CD4-positive, alpha-beta memory T cell (primary cell): ENCODE measurements at regions of chr9 and their contacts with region 1.

Region 1: DNA sequence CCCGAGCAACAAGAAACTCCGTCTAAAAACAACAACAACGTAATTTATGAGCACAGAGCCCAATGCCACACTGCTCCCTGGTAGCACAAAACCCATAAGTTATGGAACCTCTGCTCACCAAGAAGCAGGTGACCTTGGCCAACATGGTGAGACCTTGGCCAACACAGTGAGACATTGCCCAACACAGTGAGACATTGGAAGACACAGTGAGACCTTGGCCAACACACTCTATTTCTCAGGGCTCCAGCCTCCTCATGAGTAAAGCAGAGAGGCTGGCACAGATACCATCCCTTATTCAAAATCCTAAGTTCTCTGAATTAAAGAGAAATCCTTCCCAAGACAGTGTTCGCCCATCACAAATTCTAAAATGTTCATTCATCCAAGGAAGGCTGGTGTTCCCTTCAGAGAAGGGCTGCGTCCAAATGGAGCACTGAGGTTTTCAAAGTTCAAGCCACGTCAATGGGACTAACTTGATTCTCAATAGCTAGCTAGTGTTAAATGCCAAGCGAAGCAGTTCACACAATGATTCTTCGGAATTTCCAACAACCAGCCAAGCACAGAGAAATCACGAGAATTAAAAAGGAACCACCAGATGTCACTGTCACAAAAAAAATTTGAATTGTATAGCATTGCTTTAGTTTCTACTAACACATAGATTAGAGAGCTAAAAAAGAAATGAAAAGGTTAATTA is 29.5 kb downstream of the TTC39B start:
- DNase-seq: peak in 2 of 5 donors; percentile 27 to 37
- H3K4me3 ChIP-seq: no peak overlapping the region
- H3K4me3 Mint-ChIP-seq: no peak overlapping the region
- H3K27ac ChIP-seq: no peak overlapping the region
- H3K27ac Mint-ChIP-seq: peak overlapping the region in 3 of 7 donors; percentile 2 to 55 (median 48)
- H3K4me1 ChIP-seq: peaks cover 9% of the 10 kb centered on the region
- H3K4me1 Mint-ChIP-seq: peaks cover 26 to 52% (median 32%) of the 10 kb centered on the region in 4 donors
- H3K27me3 ChIP-seq: no peaks in the 10 kb centered on the region
- H3K27me3 Mint-ChIP-seq: no peaks in the 10 kb centered on the region

Region 2: DNA sequence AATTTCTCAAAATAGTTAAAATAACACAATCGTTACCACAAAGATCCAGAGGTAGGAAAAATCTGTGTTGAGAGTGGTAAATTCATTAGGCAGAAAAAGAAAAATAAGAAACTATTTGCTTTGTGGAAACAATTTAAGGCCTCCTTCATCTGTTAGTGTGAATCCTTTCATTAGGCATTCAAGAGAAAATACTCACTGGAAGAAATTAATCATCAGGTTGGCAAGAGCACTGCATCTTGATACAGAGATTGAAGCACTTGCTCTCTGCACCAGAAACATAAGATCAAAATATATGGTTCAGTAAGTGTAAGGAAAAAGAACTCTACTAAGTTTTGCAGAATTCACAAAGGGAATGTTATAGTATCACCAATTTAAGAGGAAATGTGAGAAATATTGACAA is 15.0 kb before region 1 on chr9:
- CTCF ChIA-PET with region 1: no interaction called
- POLR2A ChIA-PET with region 1: no interaction called
- intact Hi-C with region 1: no loop called
- DNase-seq: no peak
- H3K4me3 ChIP-seq: no peak overlapping the region
- H3K4me3 Mint-ChIP-seq: no peak overlapping the region
- H3K27ac ChIP-seq: no peak overlapping the region
- H3K27ac Mint-ChIP-seq: peak overlapping the region in 3 of 7 donors; percentile 68 to 74 (median 74)
- H3K4me1 ChIP-seq: no peaks in the 10 kb centered on the region
- H3K4me1 Mint-ChIP-seq: peaks cover 0 to 25% (median 11%) of the 10 kb centered on the region in 4 donors
- H3K27me3 ChIP-seq: no peaks in the 10 kb centered on the region
- H3K27me3 Mint-ChIP-seq: no peaks in the 10 kb centered on the region

Region 3: DNA sequence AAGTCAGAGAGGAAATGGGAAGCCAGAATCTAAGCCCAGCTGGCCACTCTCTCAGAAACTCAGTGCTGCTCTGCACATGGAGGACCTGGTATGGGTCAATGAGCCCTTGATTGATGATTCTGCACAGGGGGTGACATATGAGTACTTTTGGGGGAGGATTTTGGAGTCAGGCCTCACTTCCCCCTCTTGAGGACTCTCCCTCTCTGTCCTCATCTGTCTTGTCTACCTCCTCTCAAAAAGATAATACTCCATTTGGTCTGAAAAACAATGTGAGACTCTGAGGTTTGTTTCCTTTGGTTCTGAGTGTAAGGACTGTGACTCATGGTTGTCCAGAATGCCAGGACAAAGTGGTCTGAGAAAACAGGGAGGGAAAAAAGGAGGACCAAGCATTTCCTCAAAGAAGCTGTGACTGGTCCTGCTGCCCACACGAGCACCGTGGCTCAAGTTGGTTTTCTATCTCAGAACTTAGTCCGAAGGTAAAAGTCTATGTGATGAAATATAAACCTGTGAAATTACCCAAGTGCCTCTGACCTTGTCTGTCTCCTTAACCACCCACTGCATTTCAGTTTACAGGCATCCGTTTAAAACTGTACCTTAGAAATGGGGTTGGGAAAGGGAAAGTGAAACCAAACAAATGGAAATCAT is 18.3 kb after region 1 on chr9:
- CTCF ChIA-PET with region 1: interaction called, 18 read pairs
- POLR2A ChIA-PET with region 1: interaction called, 3 read pairs
- intact Hi-C with region 1: loop called (anchors 2 kb)
- DNase-seq: peak; percentile 40 to 67 (median 57)
- H3K4me3 ChIP-seq: peak overlapping the region; percentile 31 to 46
- H3K4me3 Mint-ChIP-seq: peak overlapping the region; percentile 74 to 89 (median 85)
- H3K27ac ChIP-seq: peak overlapping the region; percentile 84
- H3K27ac Mint-ChIP-seq: peak overlapping the region; percentile 92 to 99 (median 97)
- H3K4me1 ChIP-seq: peaks cover 77% of the 10 kb centered on the region
- H3K4me1 Mint-ChIP-seq: peaks cover 61 to 87% (median 76%) of the 10 kb centered on the region in 4 donors
- H3K27me3 ChIP-seq: no peaks in the 10 kb centered on the region
- H3K27me3 Mint-ChIP-seq: no peaks in the 10 kb centered on the region

Region 4: DNA sequence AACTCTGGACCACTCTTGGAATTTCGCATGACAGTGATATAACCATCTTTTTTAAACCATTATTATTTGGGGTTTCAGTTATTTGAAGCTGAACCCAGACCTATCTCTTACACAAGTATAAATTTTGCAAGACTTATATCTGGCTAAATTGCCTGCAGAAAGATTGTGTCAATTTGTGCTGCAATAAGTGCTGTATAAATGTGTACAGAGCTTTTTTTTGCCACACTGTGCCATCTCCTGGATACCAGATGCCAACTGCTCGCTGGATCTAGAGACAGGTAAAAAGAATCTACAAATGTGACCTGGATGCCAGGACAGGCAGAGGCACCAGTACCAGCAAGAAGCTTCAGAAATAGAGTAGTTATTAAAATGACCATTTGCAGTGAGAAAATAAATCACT is 55.4 kb after region 1 on chr9:
- CTCF ChIA-PET with region 1: interaction called, 5 read pairs
- POLR2A ChIA-PET with region 1: no interaction called
- intact Hi-C with region 1: loop called (anchors 1 kb)
- DNase-seq: no peak
- H3K4me3 ChIP-seq: no peak overlapping the region
- H3K4me3 Mint-ChIP-seq: no peak overlapping the region
- H3K27ac ChIP-seq: no peak overlapping the region
- H3K27ac Mint-ChIP-seq: no peak overlapping the region
- H3K4me1 ChIP-seq: no peaks in the 10 kb centered on the region
- H3K4me1 Mint-ChIP-seq: no peaks in the 10 kb centered on the region
- H3K27me3 ChIP-seq: no peaks in the 10 kb centered on the region
- H3K27me3 Mint-ChIP-seq: no peaks in the 10 kb centered on the region

Region 5: GRCh38 chr9:15416880-15417279 is 139.3 kb after region 1 on chr9:
- CTCF ChIA-PET with region 1: interaction called, 6 read pairs
- POLR2A ChIA-PET with region 1: no interaction called
- intact Hi-C with region 1: loop called (anchors 1 kb)
- DNase-seq: peak; percentile 30 to 46 (median 40)
- H3K4me3 ChIP-seq: no peak overlapping the region
- H3K4me3 Mint-ChIP-seq: no peak overlapping the region
- H3K27ac ChIP-seq: no peak overlapping the region
- H3K27ac Mint-ChIP-seq: peak overlapping the region in 1 of 7 donors; percentile 9
- H3K4me1 ChIP-seq: peaks cover 1% of the 10 kb centered on the region
- H3K4me1 Mint-ChIP-seq: peaks cover 0 to 2% (median 1%) of the 10 kb centered on the region in 4 donors
- H3K27me3 ChIP-seq: no peaks in the 10 kb centered on the region
- H3K27me3 Mint-ChIP-seq: peaks cover 0 to 2% of the 10 kb centered on the region in 2 donors

Region 6: DNA sequence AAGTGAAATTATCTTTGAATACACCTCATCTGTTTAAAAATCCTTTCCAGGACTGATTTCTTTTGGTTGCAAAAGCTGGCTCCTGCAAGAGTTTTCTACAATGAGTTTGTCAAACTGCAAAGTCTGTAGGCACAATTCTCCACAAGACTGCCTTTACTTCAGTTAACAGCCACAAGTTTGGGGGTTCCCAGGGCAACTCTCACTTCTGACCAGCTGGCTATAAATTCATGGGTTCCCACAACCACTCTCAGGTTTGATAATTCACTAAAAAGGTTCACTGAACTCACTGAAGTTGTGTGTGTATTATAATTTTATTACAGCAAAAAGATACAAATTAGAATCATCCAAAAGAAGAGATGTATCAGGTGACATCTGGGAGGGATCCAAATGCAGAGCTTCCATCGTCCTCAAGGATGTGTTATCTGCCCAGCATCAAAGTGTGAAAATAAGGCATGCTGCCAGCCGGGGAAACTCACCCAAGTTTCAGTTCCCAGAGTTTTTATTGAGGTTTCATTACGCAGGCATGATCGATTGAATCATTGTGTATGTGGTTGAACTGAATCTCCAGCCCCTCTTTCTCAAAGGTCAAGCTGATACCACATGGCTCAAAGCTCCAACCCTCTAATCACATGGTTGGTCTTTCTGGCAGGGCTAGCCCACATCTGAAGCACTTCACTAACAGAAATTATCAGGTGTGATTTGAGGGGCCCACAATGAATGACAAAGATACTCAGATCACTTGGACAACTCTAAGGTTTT is 252.2 kb after region 1 on chr9:
- CTCF ChIA-PET with region 1: no interaction called
- POLR2A ChIA-PET with region 1: no interaction called
- intact Hi-C with region 1: loop called (anchors 1 kb)
- DNase-seq: no peak
- H3K4me3 ChIP-seq: no peak overlapping the region
- H3K4me3 Mint-ChIP-seq: no peak overlapping the region
- H3K27ac ChIP-seq: no peak overlapping the region
- H3K27ac Mint-ChIP-seq: no peak overlapping the region
- H3K4me1 ChIP-seq: no peaks in the 10 kb centered on the region
- H3K4me1 Mint-ChIP-seq: peaks cover 0 to 6% (median 4%) of the 10 kb centered on the region in 4 donors
- H3K27me3 ChIP-seq: no peaks in the 10 kb centered on the region
- H3K27me3 Mint-ChIP-seq: no peaks in the 10 kb centered on the region